Right ventricle myocardium superior (tissue), 1 donor: ENCODE measurements at regions of chr3 and their contacts with region 1.

Region 1: GRCh38 chr3:16171009-16171408 is 3.5 kb upstream of the GALNT15 start:
- DNase-seq: no peak
- ATAC-seq: no peak

Region 2: GRCh38 chr3:16239086-16239770 is 68.2 kb after region 1 on chr3:
- intact Hi-C with region 1: loop called (anchors 2 kb)
- DNase-seq: no peak
- ATAC-seq: peak; percentile 24